MCF 10A (cell line): ENCODE measurements at regions of chr12 and their contacts with region 1.

Region 1: GRCh38 chr12:132614861-132615578 is 3.6 kb upstream of the P2RX2 start:
- DNase-seq: peak; percentile 84
- H3K4me3 Mint-ChIP-seq: no peak overlapping the region
- H3K27ac Mint-ChIP-seq: no peak overlapping the region
- H3K4me1 Mint-ChIP-seq: peaks cover 6% of the 10 kb centered on the region
- H3K27me3 Mint-ChIP-seq: peaks cover 54% of the 10 kb centered on the region
- CTCF ChIP-seq: peak; percentile 89

Region 2: GRCh38 chr12:132153501-132154340 is 461.3 kb before region 1 on chr12:
- CTCF ChIA-PET with region 1: interaction called, 12 read pairs
- POLR2A ChIA-PET with region 1: no interaction called
- intact Hi-C with region 1: loop called (anchors 10 kb)
- DNase-seq: peak; percentile 71
- H3K4me3 Mint-ChIP-seq: no peak overlapping the region
- H3K27ac Mint-ChIP-seq: no peak overlapping the region
- H3K4me1 Mint-ChIP-seq: no peaks in the 10 kb centered on the region
- H3K27me3 Mint-ChIP-seq: no peaks in the 10 kb centered on the region
- CTCF ChIP-seq: peak; percentile 87

Region 3: DNA sequence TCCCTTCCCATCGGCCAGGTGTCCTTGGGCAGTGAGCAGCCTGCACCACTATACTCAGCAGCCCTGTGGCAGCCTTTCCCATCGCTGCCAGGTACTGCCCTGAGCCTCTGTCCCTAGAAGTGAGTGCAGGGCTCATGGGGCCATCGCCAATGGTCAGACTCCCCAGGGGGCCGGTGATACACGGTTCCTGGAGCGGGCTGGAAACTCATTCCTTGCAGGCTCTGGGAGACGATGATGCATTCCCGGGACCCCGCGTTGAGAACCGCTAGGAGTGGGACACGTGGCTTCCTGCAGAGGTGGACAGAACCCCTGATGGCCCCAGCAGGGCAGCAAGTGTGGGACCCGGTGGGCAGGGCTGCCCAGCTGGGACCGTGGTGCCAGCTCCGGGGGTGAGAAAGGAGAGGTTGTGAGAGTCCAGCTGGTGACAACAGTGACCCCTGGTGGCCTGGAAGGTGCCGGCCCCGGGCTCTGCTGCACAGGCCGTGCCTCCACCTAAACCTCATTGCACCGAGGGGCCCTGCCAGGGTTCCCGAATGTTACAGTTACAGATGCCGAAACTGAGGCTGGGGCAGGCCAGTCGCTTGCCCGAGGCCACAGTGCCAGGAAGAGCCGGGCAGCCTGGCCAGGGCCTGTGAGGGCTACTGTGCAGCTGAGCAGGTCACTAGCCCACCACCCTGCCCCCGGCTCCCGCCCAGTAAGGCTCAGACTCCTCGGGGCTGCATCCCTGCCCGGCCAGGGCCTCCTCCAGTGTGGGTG is 91.3 kb before region 1 on chr12:
- CTCF ChIA-PET with region 1: no interaction called
- POLR2A ChIA-PET with region 1: no interaction called
- intact Hi-C with region 1: no loop called
- DNase-seq: peak; percentile 66
- H3K4me3 Mint-ChIP-seq: peak overlapping the region; percentile 53
- H3K27ac Mint-ChIP-seq: no peak overlapping the region
- H3K4me1 Mint-ChIP-seq: peaks cover 6% of the 10 kb centered on the region
- H3K27me3 Mint-ChIP-seq: no peaks in the 10 kb centered on the region
- CTCF ChIP-seq: peak; percentile 59

Region 4: GRCh38 chr12:132600048-132601032 is 14.7 kb before region 1 on chr12:
- CTCF ChIA-PET with region 1: interaction called, 8 read pairs
- POLR2A ChIA-PET with region 1: no interaction called
- intact Hi-C with region 1: loop called (anchors 1 kb)
- DNase-seq: peak; percentile 58
- H3K4me3 Mint-ChIP-seq: peak overlapping the region; percentile 68
- H3K27ac Mint-ChIP-seq: no peak overlapping the region
- H3K4me1 Mint-ChIP-seq: no peaks in the 10 kb centered on the region
- H3K27me3 Mint-ChIP-seq: peaks cover 89% of the 10 kb centered on the region
- CTCF ChIP-seq: peak; percentile 57

Region 5: GRCh38 chr12:132624910-132625630 is 10.1 kb after region 1 on chr12:
- CTCF ChIA-PET with region 1: interaction called, 12 read pairs
- POLR2A ChIA-PET with region 1: no interaction called
- intact Hi-C with region 1: no loop called
- DNase-seq: no peak
- H3K4me3 Mint-ChIP-seq: no peak overlapping the region
- H3K27ac Mint-ChIP-seq: no peak overlapping the region
- H3K4me1 Mint-ChIP-seq: peaks cover 4% of the 10 kb centered on the region
- H3K27me3 Mint-ChIP-seq: no peaks in the 10 kb centered on the region
- CTCF ChIP-seq: no peak